Endothelial cell of umbilical vein (primary cell): ENCODE measurements at regions of chr1 and their contacts with region 1.

Region 1: GRCh38 chr1:93629099-93630059 is 52.3 kb downstream of the BCAR3 start:
- DNase-seq: peak; percentile 82
- H3K4me3 ChIP-seq: no peak overlapping the region
- H3K27ac ChIP-seq: peak overlapping the region; percentile 19
- H3K4me1 ChIP-seq: peaks cover 47% of the 10 kb centered on the region
- H3K27me3 ChIP-seq: no peaks in the 10 kb centered on the region
- CTCF ChIP-seq: peak; percentile 58 to 64
- POLR2A ChIP-seq: no peak

Region 2: GRCh38 chr1:93437976-93438605 is 191.3 kb before region 1 on chr1:
- CTCF ChIA-PET with region 1: interaction called, 10 read pairs
- POLR2A ChIA-PET with region 1: no interaction called
- dilution Hi-C with region 1: no loop called
- intact Hi-C with region 1: loop called (anchors 1 kb)
- DNase-seq: peak; percentile 69
- H3K4me3 ChIP-seq: no peak overlapping the region
- H3K27ac ChIP-seq: no peak overlapping the region
- H3K4me1 ChIP-seq: no peaks in the 10 kb centered on the region
- H3K27me3 ChIP-seq: peaks cover 0 to 12% of the 10 kb centered on the region in 2 experiments
- CTCF ChIP-seq: peak; percentile 26 to 29
- POLR2A ChIP-seq: no peak

Region 3: GRCh38 chr1:93607814-93608186 is 21.6 kb before region 1 on chr1:
- CTCF ChIA-PET with region 1: interaction called, 23 read pairs
- POLR2A ChIA-PET with region 1: no interaction called
- dilution Hi-C with region 1: no loop called
- intact Hi-C with region 1: no loop called
- DNase-seq: no peak
- H3K4me3 ChIP-seq: no peak overlapping the region
- H3K27ac ChIP-seq: no peak overlapping the region
- H3K4me1 ChIP-seq: peaks cover 42% of the 10 kb centered on the region
- H3K27me3 ChIP-seq: no peaks in the 10 kb centered on the region
- CTCF ChIP-seq: no peak
- POLR2A ChIP-seq: no peak

Region 4: GRCh38 chr1:93680757-93681550 is 51.6 kb after region 1 on chr1:
- CTCF ChIA-PET with region 1: interaction called, 69 read pairs
- POLR2A ChIA-PET with region 1: no interaction called
- dilution Hi-C with region 1: no loop called
- intact Hi-C with region 1: loop called (anchors 1 kb)
- DNase-seq: peak; percentile 89
- H3K4me3 ChIP-seq: peak overlapping the region; percentile 55 to 80 (median 72)
- H3K27ac ChIP-seq: peak overlapping the region; percentile 84
- H3K4me1 ChIP-seq: peaks cover 42% of the 10 kb centered on the region
- H3K27me3 ChIP-seq: no peaks in the 10 kb centered on the region
- CTCF ChIP-seq: peak; percentile 38 to 70
- POLR2A ChIP-seq: peak; percentile 62

Region 5: DNA sequence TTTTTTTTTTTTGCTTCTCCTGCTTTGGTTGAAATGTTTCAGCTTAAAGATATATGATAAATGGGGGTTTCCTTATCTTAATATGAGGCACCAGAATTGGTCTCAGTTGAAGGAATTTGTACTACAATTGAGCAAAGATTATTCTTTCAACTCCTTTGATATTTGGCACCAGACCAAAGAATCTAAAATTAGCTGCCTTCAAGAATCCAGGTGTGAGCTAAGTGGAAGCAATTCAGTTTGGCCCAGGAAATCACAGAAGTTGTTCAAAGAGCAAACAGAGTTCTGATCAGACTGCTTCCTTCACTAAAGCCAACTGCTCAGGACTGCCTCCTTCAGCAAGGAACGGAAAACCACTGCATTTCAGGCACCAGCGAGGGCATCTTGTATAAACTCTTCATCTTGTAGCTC is 120.5 kb after region 1 on chr1:
- CTCF ChIA-PET with region 1: interaction called, 8 read pairs
- POLR2A ChIA-PET with region 1: no interaction called
- dilution Hi-C with region 1: no loop called
- intact Hi-C with region 1: loop called (anchors 5 kb)
- DNase-seq: peak; percentile 15
- H3K4me3 ChIP-seq: no peak overlapping the region
- H3K27ac ChIP-seq: no peak overlapping the region
- H3K4me1 ChIP-seq: peaks cover 15% of the 10 kb centered on the region
- H3K27me3 ChIP-seq: no peaks in the 10 kb centered on the region
- CTCF ChIP-seq: peak in 1 of 2 donors; percentile 3
- POLR2A ChIP-seq: no peak

Region 6: GRCh38 chr1:93846211-93846991 is 217.0 kb after region 1 on chr1:
- CTCF ChIA-PET with region 1: interaction called, 325 read pairs
- POLR2A ChIA-PET with region 1: interaction called, 4 read pairs
- dilution Hi-C with region 1: no loop called
- intact Hi-C with region 1: loop called (anchors 1 kb)
- DNase-seq: peak; percentile 83
- H3K4me3 ChIP-seq: peak overlapping the region; percentile 65 to 90 (median 67)
- H3K27ac ChIP-seq: peak overlapping the region; percentile 99
- H3K4me1 ChIP-seq: peaks cover 25% of the 10 kb centered on the region
- H3K27me3 ChIP-seq: no peaks in the 10 kb centered on the region
- CTCF ChIP-seq: peak; percentile 27 to 53
- POLR2A ChIP-seq: peak; percentile 72

Region 7: DNA sequence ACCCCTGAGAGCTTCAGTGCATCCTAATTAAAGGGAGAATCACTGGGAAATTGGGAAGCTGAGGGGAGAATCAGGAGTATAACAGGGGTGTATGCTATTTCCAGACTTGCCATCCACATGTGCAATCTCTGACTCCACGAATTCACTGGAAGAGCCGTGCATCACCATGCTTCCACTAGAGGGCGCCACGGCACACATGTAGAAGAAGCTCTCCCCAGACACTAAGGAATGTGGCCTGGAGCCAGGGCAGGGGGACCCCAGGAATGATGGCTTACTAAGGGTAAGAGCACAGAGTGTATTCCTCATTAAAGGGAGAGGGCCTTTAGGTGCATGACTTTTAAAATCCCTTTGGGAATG is 410.1 kb after region 1 on chr1:
- CTCF ChIA-PET with region 1: no interaction called
- POLR2A ChIA-PET with region 1: no interaction called
- dilution Hi-C with region 1: no loop called
- intact Hi-C with region 1: no loop called
- DNase-seq: peak; percentile 88
- H3K4me3 ChIP-seq: no peak overlapping the region
- H3K27ac ChIP-seq: peak overlapping the region; percentile 98
- H3K4me1 ChIP-seq: peaks cover 43% of the 10 kb centered on the region
- H3K27me3 ChIP-seq: no peaks in the 10 kb centered on the region
- CTCF ChIP-seq: peak; percentile 86 to 97
- POLR2A ChIP-seq: no peak

Region 8: GRCh38 chr1:94993931-94994645 is 1364.7 kb after region 1 on chr1:
- CTCF ChIA-PET with region 1: no interaction called
- POLR2A ChIA-PET with region 1: no interaction called
- dilution Hi-C with region 1: no loop called
- intact Hi-C with region 1: no loop called
- DNase-seq: peak; percentile 64
- H3K4me3 ChIP-seq: no peak overlapping the region
- H3K27ac ChIP-seq: peak overlapping the region; percentile 30
- H3K4me1 ChIP-seq: peaks cover 25% of the 10 kb centered on the region
- H3K27me3 ChIP-seq: no peaks in the 10 kb centered on the region
- CTCF ChIP-seq: no peak
- POLR2A ChIP-seq: no peak